ENCODE measurements at regions of chr14 and their contacts with region 1.

Region 1: DNA sequence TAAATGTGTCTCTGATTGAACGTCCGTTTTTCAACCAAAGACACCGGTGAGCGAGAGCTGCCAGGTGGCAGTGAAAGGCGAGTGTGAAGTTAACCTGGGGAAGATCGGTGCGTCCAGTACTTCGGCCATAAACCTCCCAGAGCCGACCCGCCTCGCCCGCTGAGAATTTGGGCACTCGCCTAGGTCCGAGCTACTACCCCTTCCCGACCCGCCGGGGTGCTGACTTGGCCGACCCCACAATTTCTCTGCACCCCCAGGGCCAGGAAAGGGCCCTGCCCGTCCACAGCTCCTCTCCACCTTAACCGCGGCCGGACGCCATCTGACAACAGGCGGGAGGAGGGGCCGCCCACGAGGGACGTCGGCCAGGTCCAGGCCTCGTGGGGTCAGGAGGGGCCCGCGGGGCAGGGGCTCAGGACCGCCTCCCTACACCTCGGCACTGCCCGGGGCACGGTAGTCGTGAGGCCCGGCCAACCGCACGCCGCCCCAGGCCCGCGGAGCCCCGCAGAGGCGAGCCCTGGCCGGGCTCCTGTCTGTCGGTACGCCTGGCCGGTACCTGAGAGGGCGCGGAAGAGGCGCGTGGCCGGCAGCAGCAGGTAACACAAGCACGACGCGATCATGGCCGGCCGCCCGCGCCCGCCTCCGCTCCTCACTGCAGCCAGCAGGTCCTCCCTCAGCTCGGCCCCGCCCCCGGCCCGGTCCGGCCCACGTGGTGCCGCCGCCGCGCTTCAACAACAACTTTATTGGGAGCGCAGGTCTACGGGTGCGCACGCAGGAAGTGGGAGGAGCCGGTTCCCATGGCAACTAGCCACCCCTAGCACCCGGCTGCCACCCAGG is at the start of gene ANGEL1:
- DNase-seq: peak; percentile 96
- H3K4me3 Mint-ChIP-seq: peak within 1 kb of the TSS; percentile 96
- H3K27ac Mint-ChIP-seq: peak within 1 kb of the TSS; percentile 95
- H3K4me1 Mint-ChIP-seq: peaks cover 23% of the 10 kb centered on the region
- H3K27me3 Mint-ChIP-seq: peaks cover 2% of the 10 kb centered on the region
- total RNA-seq, gene ANGEL1: 14.1 and 14.8 TPM in 2 replicates

Region 2: DNA sequence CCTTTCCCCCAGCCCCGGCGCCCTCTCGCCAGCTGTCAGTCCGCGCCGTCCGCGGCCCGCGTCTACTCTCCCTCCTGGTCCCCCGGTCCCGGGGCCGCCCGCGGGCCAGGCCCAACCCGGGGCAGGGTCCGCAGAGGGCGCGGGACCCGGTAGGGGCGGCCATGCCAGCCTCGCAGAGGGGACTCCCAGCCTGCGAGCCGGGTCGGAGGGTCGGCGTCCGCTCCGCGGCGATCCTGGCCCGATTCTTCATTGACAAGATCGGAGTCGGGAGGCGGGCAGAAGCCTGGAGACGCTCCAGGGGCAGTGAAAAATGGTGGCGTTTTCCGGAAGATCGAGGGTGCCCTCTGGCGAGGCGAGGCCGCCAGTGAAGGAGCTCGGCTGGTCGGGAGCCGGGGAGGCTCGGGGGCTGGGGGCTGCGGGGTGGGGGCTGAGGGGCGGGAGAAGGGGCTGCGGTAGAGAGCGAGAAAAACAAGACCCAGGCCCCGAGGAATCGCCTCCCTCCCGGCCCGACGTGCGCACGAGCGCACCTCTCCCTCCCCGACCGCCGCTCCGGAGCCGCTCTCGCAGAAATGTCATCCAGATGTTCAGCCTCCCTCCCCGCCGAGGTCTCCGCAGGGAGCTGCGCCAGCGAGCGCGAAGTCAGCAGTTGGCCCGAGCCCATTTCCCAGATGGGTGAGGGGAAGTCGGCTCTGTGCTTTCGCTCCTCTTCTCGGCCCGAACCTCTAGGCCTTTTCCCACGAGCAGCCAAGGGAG is 830.0 kb before region 1 on chr14:
- intact Hi-C with region 1: loop called (anchors 5 kb)
- DNase-seq: peak; percentile 75
- H3K4me3 Mint-ChIP-seq: peak overlapping the region; percentile 84
- H3K27ac Mint-ChIP-seq: peak overlapping the region; percentile 85
- H3K4me1 Mint-ChIP-seq: peaks cover 52% of the 10 kb centered on the region
- H3K27me3 Mint-ChIP-seq: peaks cover 5% of the 10 kb centered on the region

Region 3: GRCh38 chr14:76710056-76711010 is 102.1 kb before region 1 on chr14:
- intact Hi-C with region 1: loop called (anchors 1 kb)
- DNase-seq: no peak
- H3K4me3 Mint-ChIP-seq: no peak overlapping the region
- H3K27ac Mint-ChIP-seq: no peak overlapping the region
- H3K4me1 Mint-ChIP-seq: no peaks in the 10 kb centered on the region
- H3K27me3 Mint-ChIP-seq: peaks cover 14% of the 10 kb centered on the region

Region 4: GRCh38 chr14:76767681-76768656 is 44.5 kb before region 1 on chr14:
- intact Hi-C with region 1: loop called (anchors 2 kb)
- DNase-seq: peak; percentile 74
- H3K4me3 Mint-ChIP-seq: peak overlapping the region; percentile 42
- H3K27ac Mint-ChIP-seq: peak overlapping the region; percentile 79
- H3K4me1 Mint-ChIP-seq: peaks cover 30% of the 10 kb centered on the region
- H3K27me3 Mint-ChIP-seq: peaks cover 26% of the 10 kb centered on the region

Region 5: GRCh38 chr14:76956316-76957090 is 144.1 kb after region 1 on chr14:
- intact Hi-C with region 1: loop called (anchors 5 kb)
- DNase-seq: peak; percentile 85
- H3K4me3 Mint-ChIP-seq: peak overlapping the region; percentile 74
- H3K27ac Mint-ChIP-seq: peak overlapping the region; percentile 90
- H3K4me1 Mint-ChIP-seq: peaks cover 77% of the 10 kb centered on the region
- H3K27me3 Mint-ChIP-seq: no peaks in the 10 kb centered on the region

Region 6: GRCh38 chr14:77040059-77040740 is 227.8 kb after region 1 on chr14:
- intact Hi-C with region 1: loop called (anchors 2 kb)
- DNase-seq: peak; percentile 83
- H3K4me3 Mint-ChIP-seq: peak overlapping the region; percentile 80
- H3K27ac Mint-ChIP-seq: peak overlapping the region; percentile 91
- H3K4me1 Mint-ChIP-seq: peaks cover 85% of the 10 kb centered on the region
- H3K27me3 Mint-ChIP-seq: no peaks in the 10 kb centered on the region

Region 7: GRCh38 chr14:77376771-77377501 is 564.5 kb after region 1 on chr14 and contains the starts of genes SAMD15 and TMED8:
- intact Hi-C with region 1: loop called (anchors 5 kb)
- DNase-seq: peak; percentile 80
- H3K4me3 Mint-ChIP-seq: peak within 1 kb of the TSS; percentile 92
- H3K27ac Mint-ChIP-seq: peak within 1 kb of the TSS; percentile 89
- H3K4me1 Mint-ChIP-seq: peaks cover 37% of the 10 kb centered on the region
- H3K27me3 Mint-ChIP-seq: peaks cover 10% of the 10 kb centered on the region
- total RNA-seq, gene SAMD15: 0.29 and 1.1 TPM in 2 replicates
- total RNA-seq, gene TMED8: 28.1 and 28.4 TPM in 2 replicates

Region 8: DNA sequence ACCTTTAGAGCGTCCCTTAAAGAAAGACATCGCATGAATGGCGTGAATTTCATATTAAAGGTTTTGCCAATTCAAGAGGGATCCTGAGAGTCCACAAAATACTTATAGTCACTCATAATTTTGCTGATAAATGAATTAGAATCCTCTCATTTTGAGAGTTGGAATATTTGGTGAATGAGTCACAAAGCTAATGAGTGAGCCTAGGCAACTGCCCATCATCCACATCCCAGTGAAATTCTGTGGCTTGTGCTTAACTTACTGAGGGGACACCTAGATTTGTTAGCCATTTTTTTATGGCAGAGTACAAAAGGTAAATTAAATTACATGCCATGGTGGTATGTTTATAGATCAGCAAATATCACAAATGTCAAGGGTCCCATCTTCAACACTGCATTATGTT is 623.6 kb after region 1 on chr14:
- intact Hi-C with region 1: no loop called
- DNase-seq: no peak
- H3K4me3 Mint-ChIP-seq: no peak overlapping the region
- H3K27ac Mint-ChIP-seq: no peak overlapping the region
- H3K4me1 Mint-ChIP-seq: no peaks in the 10 kb centered on the region
- H3K27me3 Mint-ChIP-seq: no peaks in the 10 kb centered on the region

Region 9: DNA sequence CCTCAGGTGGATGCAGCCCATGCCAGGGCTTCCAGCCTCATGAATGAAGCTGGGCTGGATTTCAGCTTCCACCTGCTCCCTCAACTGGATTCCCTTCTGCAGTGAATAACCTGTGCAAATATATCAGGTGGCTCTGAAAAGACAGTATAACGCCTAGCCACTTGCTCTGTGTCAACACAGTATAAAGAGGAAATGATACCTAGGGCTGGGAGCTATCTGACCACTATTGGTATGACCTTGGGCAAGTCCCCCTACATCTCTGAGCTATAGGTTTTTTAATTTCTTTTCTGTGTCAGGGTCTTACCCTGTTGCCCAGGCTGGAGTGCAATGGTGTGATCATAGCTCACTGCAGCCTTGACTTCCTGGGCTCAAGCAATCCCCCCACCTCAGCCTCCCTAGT is 666.4 kb after region 1 on chr14:
- intact Hi-C with region 1: no loop called
- DNase-seq: no peak
- H3K4me3 Mint-ChIP-seq: no peak overlapping the region
- H3K27ac Mint-ChIP-seq: no peak overlapping the region
- H3K4me1 Mint-ChIP-seq: no peaks in the 10 kb centered on the region
- H3K27me3 Mint-ChIP-seq: peaks cover 6% of the 10 kb centered on the region

Measured in activated T-helper 1 cell treated with anti-CD3 and anti-CD28 coated beads, Interleukin-12 subunit alpha, Interleukin-12 subunit beta, Interleukin-2, Interleukin-4 antibody, amounts not matched to agents 30 ng/mL and 10 ng/mL and 1 ng/mL, durations not matched to agents 14 hours and 24 hours and 36 hours (primary cell).